SK-N-SH (cell line): ENCODE measurements at regions of chr5 and their contacts with region 1.

Region 1: GRCh38 chr5:66814146-66814991 is 218.2 kb downstream of the MAST4 start:
- DNase-seq: peak; percentile 66
- H3K4me3 ChIP-seq: no peak overlapping the region; a peak in 1 of 4 replicates
- H3K27ac ChIP-seq: no peak overlapping the region
- H3K4me1 ChIP-seq: no peaks in the 10 kb centered on the region; a peak in 1 of 4 replicates
- H3K27me3 ChIP-seq: peaks cover 6% of the 10 kb centered on the region; the same call in 1 of the 2 replicates
- CTCF ChIP-seq: peak; percentile 81
- EP300 ChIP-seq: no peak
- RAD21 ChIP-seq: peak; percentile 76

Region 2: GRCh38 chr5:66595756-66596635 is 218.4 kb before region 1 on chr5 and contains the start of gene MAST4:
- CTCF ChIA-PET with region 1: no interaction called
- POLR2A ChIA-PET with region 1: no interaction called
- DNase-seq: peak; percentile 92
- H3K4me3 ChIP-seq: peak within 1 kb of the TSS; percentile 63 to 81
- H3K27ac ChIP-seq: no peak within 1 kb of the TSS
- H3K4me1 ChIP-seq: peaks cover 0 to 12% of the 10 kb centered on the region in 2 experiments; a peak in 1 of 4 replicates
- H3K27me3 ChIP-seq: peaks cover 34% of the 10 kb centered on the region
- CTCF ChIP-seq: no peak
- EP300 ChIP-seq: no peak
- RAD21 ChIP-seq: no peak
- polyA plus RNA-seq, gene MAST4: 1.3 and 2.2 TPM in 2 replicates

Region 3: DNA sequence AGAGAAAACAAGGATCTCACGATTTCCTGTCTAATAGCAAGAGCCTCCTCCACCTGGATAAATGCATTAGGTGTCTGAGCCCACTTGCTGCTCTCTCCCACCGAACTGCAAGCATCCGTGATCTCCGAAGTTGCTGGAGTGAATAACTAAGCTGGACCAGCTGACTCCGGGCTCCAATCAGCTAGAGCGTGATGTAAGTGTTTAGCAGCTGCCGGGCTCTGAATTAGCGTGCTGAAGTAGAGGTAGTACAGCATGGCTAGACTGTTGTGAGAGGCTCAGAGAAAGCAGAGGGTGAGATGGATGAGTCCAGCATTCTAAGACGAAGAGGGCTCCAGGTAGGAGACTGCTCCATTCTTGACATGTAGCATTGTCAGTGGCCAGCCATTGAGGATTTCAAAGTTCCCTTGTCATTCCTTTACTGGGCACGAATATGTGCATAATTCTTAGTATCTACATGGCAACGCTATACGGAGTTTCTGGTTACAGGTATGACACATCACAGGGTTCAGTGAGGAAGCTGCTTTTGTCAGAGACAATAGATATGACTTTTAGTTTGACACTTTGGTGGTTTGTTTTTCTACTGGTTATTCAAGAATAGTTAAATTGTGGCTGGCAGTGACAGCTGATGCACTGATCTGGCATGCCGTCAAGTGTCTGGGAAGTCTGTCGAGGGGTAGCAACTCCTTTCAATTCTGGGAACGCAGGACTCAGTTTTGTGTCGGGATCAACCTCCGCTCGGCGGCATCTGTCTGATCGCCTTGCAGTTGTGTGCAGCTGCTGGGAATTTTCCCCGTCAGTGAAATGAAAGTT is 14.4 kb after region 1 on chr5:
- CTCF ChIA-PET with region 1: interaction called, 76 read pairs
- POLR2A ChIA-PET with region 1: no interaction called
- DNase-seq: peak; percentile 39
- H3K4me3 ChIP-seq: peak overlapping the region; percentile 45 to 60
- H3K27ac ChIP-seq: no peak overlapping the region; a peak in 1 of 4 replicates
- H3K4me1 ChIP-seq: peaks cover 7 to 13% of the 10 kb centered on the region in 2 experiments; a peak in 3 of 4 replicates
- H3K27me3 ChIP-seq: peaks cover 5% of the 10 kb centered on the region; the same call in 1 of the 2 replicates
- CTCF ChIP-seq: no peak
- EP300 ChIP-seq: no peak
- RAD21 ChIP-seq: no peak

Region 4: GRCh38 chr5:66851306-66851705 is 36.9 kb after region 1 on chr5:
- CTCF ChIA-PET with region 1: interaction called, 11 read pairs
- POLR2A ChIA-PET with region 1: no interaction called
- DNase-seq: no peak
- H3K4me3 ChIP-seq: no peak overlapping the region
- H3K27ac ChIP-seq: no peak overlapping the region
- H3K4me1 ChIP-seq: peaks cover 0 to 16% of the 10 kb centered on the region in 2 experiments; a peak in 3 of 4 replicates
- H3K27me3 ChIP-seq: no peaks in the 10 kb centered on the region
- CTCF ChIP-seq: no peak
- EP300 ChIP-seq: no peak
- RAD21 ChIP-seq: no peak

Region 5: GRCh38 chr5:67149951-67150523 is 335.7 kb after region 1 on chr5:
- CTCF ChIA-PET with region 1: interaction called, 42 read pairs
- POLR2A ChIA-PET with region 1: no interaction called
- DNase-seq: peak; percentile 43
- H3K4me3 ChIP-seq: no peak overlapping the region
- H3K27ac ChIP-seq: no peak overlapping the region
- H3K4me1 ChIP-seq: no peaks in the 10 kb centered on the region
- H3K27me3 ChIP-seq: no peaks in the 10 kb centered on the region
- CTCF ChIP-seq: peak; percentile 73
- EP300 ChIP-seq: no peak
- RAD21 ChIP-seq: peak; percentile 87